ENCODE measurements at regions of chr10 and their contacts with region 1.

Region 1: GRCh38 chr10:19412531-19412930 is 363.9 kb downstream of the MALRD1 start:
- DNase-seq: no peak
- ATAC-seq: peak; percentile 56

Region 2: DNA sequence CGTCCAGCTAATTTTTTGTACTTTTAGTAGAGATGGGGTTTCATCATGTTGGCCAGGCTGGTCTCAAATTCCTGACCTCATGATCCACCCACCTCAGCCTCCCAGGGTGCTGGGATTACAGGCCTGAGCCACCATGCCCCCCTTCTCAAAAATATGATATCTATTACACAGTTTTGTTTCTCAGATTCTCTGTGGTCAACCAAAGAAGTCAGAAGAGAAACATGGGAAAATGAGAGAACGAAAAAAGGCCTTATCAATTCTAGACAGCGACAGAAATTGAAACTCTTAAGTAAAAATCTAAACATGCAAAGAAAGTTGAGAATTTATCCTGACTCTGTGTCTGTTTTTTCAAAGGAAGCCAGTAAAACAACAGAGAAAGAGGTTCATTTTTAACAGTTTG is 119.9 kb after region 1 on chr10:
- intact Hi-C with region 1: no loop called
- DNase-seq: no peak
- ATAC-seq: no peak

Region 3: DNA sequence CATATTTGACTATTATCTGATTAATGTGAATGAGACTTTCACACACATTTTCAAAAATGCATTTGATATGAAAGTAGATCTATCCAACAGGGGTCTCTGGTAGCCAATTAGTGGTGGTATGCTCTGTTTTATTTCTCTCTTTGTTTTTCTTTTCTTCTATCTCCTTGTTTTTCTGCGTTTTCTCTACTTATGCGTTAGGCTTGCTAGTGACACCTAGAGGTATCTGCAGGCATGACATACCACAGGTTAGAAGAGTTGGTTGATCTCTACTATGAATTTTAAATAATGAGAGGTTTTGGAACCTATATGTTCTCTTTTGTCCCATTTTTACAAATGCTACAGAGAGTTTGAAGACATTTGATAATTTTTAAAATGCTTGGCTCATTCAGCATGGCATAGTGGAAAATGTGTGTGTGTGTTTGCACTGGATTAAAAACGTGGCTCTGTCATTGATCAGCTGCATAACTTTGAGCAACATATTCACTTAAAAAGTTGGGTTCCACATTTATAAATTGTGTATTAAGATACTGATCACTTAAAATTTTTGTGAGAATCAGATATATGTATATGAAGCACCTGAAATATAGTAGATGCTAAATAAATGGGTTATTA is 375.6 kb after region 1 on chr10:
- intact Hi-C with region 1: loop called in 1 of 2 experiments (anchors 10 kb)
- DNase-seq: peak in 1 of 2 donors; percentile 27
- ATAC-seq: peak; percentile 38

Region 4: GRCh38 chr10:20858292-20859124 is 1446.0 kb after region 1 on chr10:
- intact Hi-C with region 1: loop called in 1 of 2 experiments (anchors 10 kb)
- DNase-seq: no peak
- ATAC-seq: peak; percentile 60